GM12878 (cell line): ENCODE measurements at regions of chr12 and their contacts with region 1.

Region 1: DNA sequence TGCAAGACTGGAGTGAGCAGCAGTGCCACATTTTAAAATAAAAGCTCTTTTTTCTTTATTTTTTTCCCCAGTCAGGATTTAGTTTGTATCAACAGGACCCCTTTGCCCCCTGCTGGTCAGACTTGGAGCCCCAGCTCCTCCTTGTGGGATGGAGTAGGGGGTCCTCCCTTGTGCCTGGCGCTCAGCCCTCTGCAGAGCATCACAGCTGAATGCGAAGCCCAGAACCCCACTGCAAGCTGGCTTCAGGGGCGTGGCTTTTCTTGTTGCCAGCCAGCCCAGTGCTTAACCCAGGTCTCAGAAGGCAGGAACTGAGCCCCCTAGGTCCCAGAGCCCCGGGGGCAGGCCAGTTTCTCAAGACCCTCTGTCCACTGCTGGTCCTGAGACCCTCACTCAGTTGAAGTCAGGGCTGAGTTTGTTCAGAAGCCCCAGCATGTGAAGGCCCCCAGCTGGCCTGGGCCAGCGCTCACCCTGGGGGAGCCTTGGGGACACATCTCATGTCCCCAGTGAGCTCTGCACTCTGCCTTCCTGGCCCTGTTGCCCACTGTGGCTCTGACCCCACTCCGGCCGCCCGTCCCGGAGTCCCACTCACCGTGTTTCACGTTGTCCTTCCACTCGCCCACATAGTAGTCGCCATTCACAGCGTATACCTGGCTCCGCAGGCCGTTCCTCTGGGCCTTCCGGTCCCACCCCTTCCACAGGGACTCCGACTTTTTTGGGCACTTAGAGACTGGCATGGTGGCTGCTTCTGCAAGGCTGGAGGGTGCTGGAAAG is 519 bp downstream of the MORN3 start:
- DNase-seq: no peak
- ATAC-seq: no peak
- H3K4me3 ChIP-seq: no peak overlapping the region
- H3K27ac ChIP-seq: no peak overlapping the region
- H3K4me1 ChIP-seq: peaks cover 15% of the 10 kb centered on the region
- H3K27me3 ChIP-seq: no peaks in the 10 kb centered on the region
- CTCF ChIP-seq: peak; percentile 58 to 71 (median 59)
- EP300 ChIP-seq: no peak
- POLR2A ChIP-seq: no peak
- RAD21 ChIP-seq: peak; percentile 73

Region 2: GRCh38 chr12:121494093-121494787 is 174.7 kb before region 1 on chr12:
- CTCF ChIA-PET with region 1: interaction called, 23 read pairs
- POLR2A ChIA-PET with region 1: interaction called, 3 read pairs
- RAD21 ChIA-PET with region 1: interaction called, 13 read pairs
- SMC1A ChIA-PET with region 1: interaction called, 6 read pairs
- in situ Hi-C with region 1: loop called (anchors 5 kb)
- intact Hi-C with region 1: no loop called
- DNase-seq: no peak
- ATAC-seq: peak; percentile 82
- H3K4me3 ChIP-seq: no peak overlapping the region
- H3K27ac ChIP-seq: no peak overlapping the region
- H3K4me1 ChIP-seq: peaks cover 5% of the 10 kb centered on the region
- H3K27me3 ChIP-seq: no peaks in the 10 kb centered on the region
- CTCF ChIP-seq: peak; percentile 70 to 96 (median 95)
- EP300 ChIP-seq: no peak
- POLR2A ChIP-seq: no peak
- RAD21 ChIP-seq: peak; percentile 58

Region 3: DNA sequence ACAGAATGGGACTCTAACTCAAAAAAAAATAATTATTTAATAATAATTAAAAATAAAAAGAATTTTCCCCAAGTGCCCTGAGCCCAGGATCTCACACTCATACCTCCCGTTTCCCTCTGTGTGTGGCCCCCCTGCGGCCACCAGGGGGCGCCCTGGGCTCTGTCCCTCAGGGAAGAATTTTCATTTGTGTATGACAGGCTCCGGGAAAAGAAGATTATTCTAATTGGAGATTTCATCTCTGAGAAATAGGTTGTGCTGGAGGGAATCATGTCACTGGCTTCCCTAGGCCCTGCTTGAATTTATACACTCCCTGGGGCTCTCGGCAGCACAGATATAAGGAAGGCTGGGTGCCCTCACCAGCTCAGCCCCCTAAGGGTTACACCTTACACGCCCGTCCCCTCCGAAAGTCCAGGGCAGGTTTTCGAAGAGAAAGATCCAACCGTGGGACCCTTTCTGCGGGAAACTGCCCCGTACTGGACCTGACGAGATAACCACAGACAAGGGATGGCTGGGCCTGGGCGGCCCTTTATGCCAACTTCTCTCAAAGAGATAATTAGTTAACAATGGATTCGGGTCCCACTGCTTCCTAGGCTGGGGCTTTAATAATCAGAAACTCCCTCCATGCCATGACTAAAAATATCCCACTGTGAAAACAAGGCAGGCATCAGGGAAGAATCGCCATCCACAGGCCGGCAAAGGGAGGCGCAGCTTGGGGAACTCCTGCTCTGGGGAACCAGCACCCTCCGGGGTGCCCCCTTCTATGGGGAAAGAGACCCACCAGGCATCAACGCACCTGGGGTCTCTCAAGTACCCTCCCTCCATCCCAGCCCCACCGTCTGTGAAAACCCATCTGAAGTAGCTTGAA is 168.8 kb before region 1 on chr12:
- CTCF ChIA-PET with region 1: interaction called, 23 read pairs
- POLR2A ChIA-PET with region 1: interaction called, 3 read pairs
- RAD21 ChIA-PET with region 1: interaction called, 13 read pairs
- SMC1A ChIA-PET with region 1: interaction called, 6 read pairs
- in situ Hi-C with region 1: no loop called
- intact Hi-C with region 1: no loop called
- DNase-seq: no peak
- ATAC-seq: peak; percentile 94
- H3K4me3 ChIP-seq: no peak overlapping the region
- H3K27ac ChIP-seq: no peak overlapping the region
- H3K4me1 ChIP-seq: no peaks in the 10 kb centered on the region
- H3K27me3 ChIP-seq: no peaks in the 10 kb centered on the region
- CTCF ChIP-seq: peak; percentile 85 to 96 (median 91)
- EP300 ChIP-seq: no peak
- POLR2A ChIP-seq: no peak
- RAD21 ChIP-seq: peak; percentile 92